Activated naive CD4-positive, alpha-beta T cell treated with anti-CD3 and anti-CD28 coated beads for 36 hours (primary cell): ENCODE measurements at regions of chr3 and their contacts with region 1.

Region 1: DNA sequence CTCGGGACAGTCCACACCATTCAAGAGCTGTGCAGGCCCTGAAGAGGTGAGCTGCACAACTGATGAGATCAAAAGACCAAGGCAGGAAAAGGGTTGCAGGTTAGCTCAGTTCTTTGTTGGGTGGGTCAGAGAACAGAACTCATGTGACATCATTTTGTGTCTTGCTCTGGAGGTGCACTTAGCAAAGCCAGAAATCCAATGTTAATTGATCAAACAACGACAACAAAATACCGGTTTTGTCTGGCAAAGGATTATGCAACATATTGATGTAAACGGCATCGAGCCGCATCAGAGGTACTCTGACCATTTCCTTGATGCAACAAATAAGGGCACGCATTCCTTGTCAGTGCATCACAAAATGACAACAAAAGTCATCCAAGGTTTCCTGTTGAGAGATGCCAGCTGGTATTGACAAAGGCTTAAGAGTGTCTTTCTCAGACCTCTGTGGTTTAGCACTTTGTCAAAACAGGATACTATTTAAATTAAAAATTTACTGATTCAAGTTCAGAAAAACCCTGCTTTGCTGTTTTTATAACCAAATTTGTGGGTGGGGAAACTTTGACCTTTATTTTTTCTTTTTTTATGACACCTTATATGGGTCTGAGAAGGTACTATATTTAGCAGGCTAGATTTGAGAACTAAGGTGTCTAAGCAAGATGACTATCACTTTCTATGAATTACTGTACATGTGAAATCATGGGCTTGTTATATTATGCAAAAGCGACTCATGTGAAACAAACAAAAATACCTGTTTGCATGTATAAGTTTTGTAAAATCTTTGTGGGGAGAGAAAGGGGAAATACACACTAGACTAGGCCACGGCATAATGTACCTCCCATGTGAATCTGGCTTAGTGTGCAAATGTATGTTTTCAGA is 496.1 kb downstream of the FOXP1 start:
- DNase-seq: peak; percentile 69
- H3K4me3 Mint-ChIP-seq: peak overlapping the region; percentile 14
- H3K27ac Mint-ChIP-seq: peak overlapping the region; percentile 88
- H3K4me1 Mint-ChIP-seq: peaks cover 89% of the 10 kb centered on the region
- H3K27me3 Mint-ChIP-seq: no peaks in the 10 kb centered on the region

Region 2: DNA sequence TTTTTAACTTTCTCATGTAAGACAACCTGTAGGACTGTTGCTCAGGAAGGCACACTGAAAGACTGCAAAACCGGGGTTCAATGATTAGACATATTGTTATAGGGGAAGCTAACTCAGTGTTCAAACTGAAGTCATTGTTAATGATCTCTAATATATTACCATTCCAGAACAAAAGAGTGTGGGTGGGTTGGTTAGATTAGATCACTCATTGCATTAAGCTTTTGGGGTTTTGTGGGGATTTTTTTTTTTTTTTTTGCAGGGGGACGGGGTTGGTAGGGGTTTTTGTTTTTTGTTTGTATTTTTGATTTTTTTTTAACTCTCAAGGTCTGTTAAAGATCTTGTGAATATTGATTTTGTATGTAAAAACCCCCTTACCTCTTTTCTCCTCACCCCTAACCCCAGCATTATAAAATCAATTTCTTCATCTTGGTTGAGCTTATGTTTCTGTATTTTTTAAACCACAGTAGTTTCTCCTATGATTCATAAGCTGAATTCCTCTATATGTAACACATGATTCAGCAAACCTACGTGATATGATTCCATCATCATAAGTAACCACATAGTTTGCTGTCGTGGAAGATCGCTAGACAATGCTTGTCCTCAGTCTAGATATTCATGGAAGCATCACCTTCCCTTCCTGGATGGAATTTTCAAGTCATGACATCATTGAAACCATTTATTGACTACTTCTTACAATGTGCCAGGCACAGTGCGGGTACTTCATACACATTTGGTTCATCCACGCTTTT is 230.8 kb before region 1 on chr3:
- CTCF ChIA-PET with region 1: no interaction called
- intact Hi-C with region 1: loop called (anchors 5 kb)
- DNase-seq: peak; percentile 10
- H3K4me3 Mint-ChIP-seq: no peak overlapping the region
- H3K27ac Mint-ChIP-seq: no peak overlapping the region
- H3K4me1 Mint-ChIP-seq: peaks cover 28% of the 10 kb centered on the region
- H3K27me3 Mint-ChIP-seq: peaks cover 23% of the 10 kb centered on the region

Region 3: DNA sequence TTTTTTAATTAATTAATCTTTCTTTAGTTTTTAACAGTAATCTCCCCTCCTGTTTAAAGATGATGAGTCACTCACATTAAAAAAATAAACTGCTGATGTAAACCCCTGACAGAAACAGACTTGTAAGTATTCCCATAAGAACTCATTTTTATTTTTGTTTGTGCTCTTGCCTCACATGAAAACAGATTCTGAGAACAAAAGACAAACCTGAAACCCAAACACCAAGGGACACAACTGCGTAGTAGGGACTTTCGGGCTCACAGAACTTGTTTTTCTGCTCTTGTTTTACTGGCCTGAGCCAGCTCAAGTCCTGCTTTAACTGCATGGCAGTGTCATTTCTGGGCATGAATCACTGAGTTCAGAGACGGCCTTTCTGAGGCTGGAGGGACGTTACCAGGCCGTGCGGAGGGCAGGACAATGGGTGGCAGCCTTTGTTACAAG is 104.7 kb before region 1 on chr3:
- CTCF ChIA-PET with region 1: no interaction called
- intact Hi-C with region 1: no loop called
- DNase-seq: peak; percentile 66
- H3K4me3 Mint-ChIP-seq: no peak overlapping the region
- H3K27ac Mint-ChIP-seq: peak overlapping the region; percentile 96
- H3K4me1 Mint-ChIP-seq: peaks cover 74% of the 10 kb centered on the region
- H3K27me3 Mint-ChIP-seq: no peaks in the 10 kb centered on the region

Region 4: GRCh38 chr3:71064288-71064955 is 23.0 kb before region 1 on chr3:
- CTCF ChIA-PET with region 1: interaction called, 6 read pairs
- intact Hi-C with region 1: loop called (anchors 1 kb)
- DNase-seq: peak; percentile 69
- H3K4me3 Mint-ChIP-seq: no peak overlapping the region
- H3K27ac Mint-ChIP-seq: no peak overlapping the region
- H3K4me1 Mint-ChIP-seq: peaks cover 51% of the 10 kb centered on the region
- H3K27me3 Mint-ChIP-seq: no peaks in the 10 kb centered on the region

Region 5: GRCh38 chr3:71149959-71150954 is 62.9 kb after region 1 on chr3:
- CTCF ChIA-PET with region 1: interaction called, 3 read pairs
- intact Hi-C with region 1: loop called (anchors 2 kb)
- DNase-seq: no peak
- H3K4me3 Mint-ChIP-seq: peak overlapping the region; percentile 56
- H3K27ac Mint-ChIP-seq: peak overlapping the region; percentile 68
- H3K4me1 Mint-ChIP-seq: peaks cover 64% of the 10 kb centered on the region
- H3K27me3 Mint-ChIP-seq: no peaks in the 10 kb centered on the region

Region 6: GRCh38 chr3:71360764-71361163 is 273.4 kb after region 1 on chr3:
- CTCF ChIA-PET with region 1: no interaction called
- intact Hi-C with region 1: loop called (anchors 1 kb)
- DNase-seq: peak; percentile 43
- H3K4me3 Mint-ChIP-seq: peak overlapping the region; percentile 48
- H3K27ac Mint-ChIP-seq: peak overlapping the region; percentile 70
- H3K4me1 Mint-ChIP-seq: peaks cover 82% of the 10 kb centered on the region
- H3K27me3 Mint-ChIP-seq: no peaks in the 10 kb centered on the region

Region 7: DNA sequence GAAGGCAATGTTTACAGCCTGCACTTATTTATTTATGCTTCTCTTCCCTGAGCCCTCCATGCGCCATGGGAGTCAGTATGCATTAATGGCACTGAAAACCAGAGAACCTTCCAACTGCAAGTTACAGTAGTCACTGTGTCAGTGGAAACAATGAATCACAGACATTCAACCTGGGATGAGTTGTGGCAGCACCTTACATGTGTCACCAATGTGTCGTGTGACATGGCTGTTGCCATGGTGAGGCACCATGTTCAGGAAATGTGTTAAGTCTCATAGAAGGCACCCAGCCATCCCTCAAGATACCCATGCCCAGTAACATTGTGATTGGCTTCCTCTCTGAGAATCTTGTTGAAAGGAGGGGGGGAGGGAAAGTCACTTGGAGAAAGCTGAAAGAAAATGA is 391.2 kb after region 1 on chr3:
- CTCF ChIA-PET with region 1: no interaction called
- intact Hi-C with region 1: loop called (anchors 1 kb)
- DNase-seq: peak; percentile 94
- H3K4me3 Mint-ChIP-seq: peak overlapping the region; percentile 38
- H3K27ac Mint-ChIP-seq: peak overlapping the region; percentile 96
- H3K4me1 Mint-ChIP-seq: peaks cover 85% of the 10 kb centered on the region
- H3K27me3 Mint-ChIP-seq: no peaks in the 10 kb centered on the region

Region 8: GRCh38 chr3:71512000-71512399 is 424.6 kb after region 1 on chr3:
- CTCF ChIA-PET with region 1: no interaction called
- intact Hi-C with region 1: no loop called
- DNase-seq: peak; percentile 59
- H3K4me3 Mint-ChIP-seq: no peak overlapping the region
- H3K27ac Mint-ChIP-seq: peak overlapping the region; percentile 6
- H3K4me1 Mint-ChIP-seq: peaks cover 12% of the 10 kb centered on the region
- H3K27me3 Mint-ChIP-seq: no peaks in the 10 kb centered on the region